HCT116 (cell line): ENCODE measurements at regions of chr10 and their contacts with region 1.

Region 1: DNA sequence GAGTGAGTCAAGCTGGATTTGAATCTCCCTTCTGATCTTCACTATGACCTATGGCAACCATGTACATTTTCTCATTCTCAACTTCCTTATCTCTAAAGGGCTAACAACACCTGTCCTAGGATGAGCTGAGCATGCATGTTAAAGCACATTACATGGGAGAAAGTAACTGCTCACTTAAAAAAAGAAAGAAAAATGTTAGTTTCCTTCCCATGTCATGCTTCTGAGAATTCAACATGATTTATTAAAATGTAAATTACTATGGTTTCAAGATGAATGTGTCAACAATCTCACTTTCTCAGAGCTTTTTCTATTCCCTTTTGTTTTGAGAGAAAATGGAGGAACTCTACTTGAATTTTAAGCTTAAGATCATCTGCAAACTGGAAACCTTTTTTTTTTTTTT is 295.3 kb downstream of the SKIDA1 start:
- DNase-seq: no peak
- ATAC-seq: no peak
- H3K4me3 ChIP-seq: no peak overlapping the region
- H3K27ac ChIP-seq: no peak overlapping the region
- H3K4me1 ChIP-seq: no peaks in the 10 kb centered on the region
- H3K27me3 ChIP-seq: no peaks in the 10 kb centered on the region
- CTCF ChIP-seq: no peak
- POLR2A ChIP-seq: no peak
- RAD21 ChIP-seq: no peak

Region 2: DNA sequence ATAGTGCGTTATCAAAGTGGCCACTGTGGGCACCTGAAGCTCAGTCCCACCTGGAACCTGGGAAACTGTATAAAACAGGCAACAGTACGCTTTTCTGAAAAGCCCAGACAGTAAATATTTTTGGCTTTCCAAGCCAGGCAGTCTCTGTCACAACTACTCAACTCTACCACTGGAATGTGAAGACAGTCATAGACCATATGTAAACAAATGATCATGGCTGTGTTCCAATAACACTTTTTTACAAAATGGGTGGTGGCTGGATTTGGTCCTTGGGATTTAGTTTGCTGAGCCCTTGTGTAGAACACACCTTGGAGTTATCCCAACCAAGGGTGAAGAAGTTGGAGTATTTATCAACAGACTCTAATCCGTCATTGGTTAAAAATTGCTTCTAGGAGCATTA is 35.4 kb after region 1 on chr10:
- CTCF ChIA-PET with region 1: no interaction called
- POLR2A ChIA-PET with region 1: no interaction called
- RAD21 ChIA-PET with region 1: no interaction called
- intact Hi-C with region 1: loop called (anchors 1 kb)
- DNase-seq: no peak
- ATAC-seq: peak; percentile 33; the same call in 1 of the 2 replicates
- H3K4me3 ChIP-seq: no peak overlapping the region
- H3K27ac ChIP-seq: no peak overlapping the region
- H3K4me1 ChIP-seq: peaks cover 7 to 8% of the 10 kb centered on the region in 2 experiments
- H3K27me3 ChIP-seq: no peaks in the 10 kb centered on the region
- CTCF ChIP-seq: no peak
- POLR2A ChIP-seq: no peak
- RAD21 ChIP-seq: no peak